ENCODE measurements at regions of chr6 and their contacts with region 1.

Region 1: DNA sequence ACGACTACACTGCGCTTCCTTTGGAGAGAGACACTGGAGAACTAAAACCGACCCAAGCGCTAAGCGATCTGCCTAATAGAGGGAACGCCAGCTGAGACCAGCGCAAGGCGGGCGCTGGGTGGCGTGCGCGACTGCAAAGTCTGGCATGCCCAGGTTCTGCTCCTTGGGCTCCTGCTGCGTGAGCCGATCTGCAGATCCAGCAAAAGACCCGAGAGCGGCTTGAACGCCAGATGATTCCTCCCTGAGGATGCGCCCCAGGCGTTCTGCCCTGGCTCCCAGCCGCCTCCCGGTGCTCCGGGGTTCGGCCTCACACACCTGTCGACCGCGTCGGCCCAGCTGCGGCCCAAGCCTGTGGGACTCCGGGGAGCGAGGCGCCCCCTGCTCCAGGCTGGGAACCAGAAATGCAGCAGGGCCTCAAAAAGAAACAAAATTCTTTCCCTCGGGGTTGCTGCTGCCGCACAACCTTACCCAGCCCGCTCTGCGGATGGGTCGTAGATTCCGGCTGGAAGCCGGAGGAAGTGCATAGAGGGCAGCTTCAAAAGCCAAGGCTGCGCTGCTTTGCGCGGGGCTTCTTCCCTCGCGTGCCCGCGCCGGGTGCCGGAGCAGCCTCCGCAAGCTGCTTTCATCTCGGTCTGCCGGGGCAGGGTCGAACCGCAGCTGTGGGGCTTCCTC is 17.9 kb upstream of the PRDM13 start:
- DNase-seq: peak; percentile 77 to 88 (median 88)
- H3K4me3 ChIP-seq: peak overlapping the region; percentile 9 to 78 (median 57)
- H3K27ac ChIP-seq: no peak overlapping the region
- H3K4me1 ChIP-seq: peaks cover 0 to 25% (median 20%) of the 10 kb centered on the region in 4 experiments
- H3K27me3 ChIP-seq: peaks cover 35 to 87% (median 52%) of the 10 kb centered on the region in 5 experiments

Region 2: GRCh38 chr6:99575544-99576227 is 13.1 kb before region 1 on chr6:
- CTCF ChIA-PET with region 1: interaction called, 16 read pairs
- POLR2A ChIA-PET with region 1: no interaction called
- DNase-seq: no peak
- H3K4me3 ChIP-seq: no peak overlapping the region
- H3K27ac ChIP-seq: no peak overlapping the region
- H3K4me1 ChIP-seq: peaks cover 0 to 8% (median 0%) of the 10 kb centered on the region in 4 experiments
- H3K27me3 ChIP-seq: peaks cover 0 to 11% (median 2%) of the 10 kb centered on the region in 5 experiments

Region 3: GRCh38 chr6:99603421-99604165 is 14.8 kb after region 1 on chr6:
- CTCF ChIA-PET with region 1: interaction called, 15 read pairs
- POLR2A ChIA-PET with region 1: interaction called, 3 read pairs
- DNase-seq: peak in 2 of 3 donors; percentile 53 to 61
- H3K4me3 ChIP-seq: peak overlapping the region in 5 of 7 experiments; percentile 14 to 57 (median 36)
- H3K27ac ChIP-seq: no peak overlapping the region
- H3K4me1 ChIP-seq: peaks cover 0 to 15% (median 12%) of the 10 kb centered on the region in 4 experiments
- H3K27me3 ChIP-seq: peaks cover 19 to 98% (median 69%) of the 10 kb centered on the region in 5 experiments

Region 4: GRCh38 chr6:99613409-99613704 is 24.6 kb after region 1 on chr6:
- CTCF ChIA-PET with region 1: interaction called, 23 read pairs
- POLR2A ChIA-PET with region 1: no interaction called
- DNase-seq: peak; percentile 66 to 78 (median 71)
- H3K4me3 ChIP-seq: peak overlapping the region in 5 of 7 experiments; percentile 33 to 66 (median 56)
- H3K27ac ChIP-seq: no peak overlapping the region
- H3K4me1 ChIP-seq: peaks cover 10 to 35% (median 26%) of the 10 kb centered on the region in 4 experiments
- H3K27me3 ChIP-seq: peaks cover 50 to 100% (median 66%) of the 10 kb centered on the region in 5 experiments

Measured in common myeloid progenitor, CD34-positive (primary cell).